AG04450 (cell line): ENCODE measurements at regions of chr22 and their contacts with region 1.

Region 1: GRCh38 chr22:41448189-41448808 is 1.7 kb upstream of the TOB2 start:
- DNase-seq: peak; percentile 97
- H3K4me3 ChIP-seq: peak overlapping the region; percentile 98
- H3K27ac ChIP-seq: peak overlapping the region; percentile 96
- H3K27me3 ChIP-seq: no peaks in the 10 kb centered on the region
- CTCF ChIP-seq: no peak

Region 2: DNA sequence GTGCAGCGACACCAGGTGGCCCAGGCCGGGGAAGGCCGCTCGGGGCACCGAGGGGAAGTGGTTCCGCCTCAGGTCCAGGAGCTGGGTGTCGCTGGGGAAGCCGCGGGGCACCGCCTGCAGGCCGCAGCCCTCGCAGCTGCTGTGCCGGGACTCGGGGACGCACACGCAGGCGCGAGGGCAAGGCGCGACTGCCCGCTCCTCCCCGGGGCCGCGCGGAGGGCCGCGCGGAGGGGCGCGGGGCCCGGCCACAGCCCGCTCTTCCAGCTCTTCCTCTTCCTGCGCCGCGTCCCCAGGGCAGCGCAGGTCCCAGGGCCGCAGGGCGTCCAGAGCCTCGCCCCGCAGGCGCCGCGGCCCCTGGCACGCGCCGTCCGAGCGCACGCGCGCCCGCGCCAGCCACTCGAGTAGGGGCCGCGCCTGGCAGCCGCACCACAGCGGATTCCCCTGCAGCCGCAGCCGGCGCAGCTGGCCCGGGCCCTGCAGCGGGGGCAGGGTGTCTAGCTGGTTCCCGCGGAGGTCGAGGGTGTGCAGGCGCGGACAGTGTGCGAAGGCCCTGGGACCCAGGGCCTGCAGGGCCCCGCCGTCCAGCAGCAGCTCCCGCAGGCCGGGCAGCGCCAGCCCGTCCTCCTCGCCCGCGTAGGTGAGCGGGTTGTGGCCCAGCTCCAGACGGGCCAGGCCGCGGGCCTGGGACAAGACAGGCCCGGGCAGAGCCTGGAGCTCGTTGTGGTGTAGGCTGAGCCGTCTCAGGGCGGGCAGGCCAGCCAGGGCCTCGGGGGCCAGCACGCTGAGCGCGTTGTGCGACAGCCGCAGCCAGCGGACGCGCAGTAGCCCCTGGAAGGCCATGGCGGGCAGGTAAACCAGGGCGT is 210.4 kb before region 1 on chr22:
- CTCF ChIA-PET with region 1: no interaction called
- POLR2A ChIA-PET with region 1: no interaction called
- DNase-seq: no peak
- H3K4me3 ChIP-seq: peak overlapping the region; percentile 17; the same call in 1 of the 2 replicates
- H3K27ac ChIP-seq: no peak overlapping the region
- H3K27me3 ChIP-seq: peaks cover 2% of the 10 kb centered on the region
- CTCF ChIP-seq: peak; percentile 24; the same call in 1 of the 2 replicates

Region 3: GRCh38 chr22:41285820-41286638 is 162.3 kb before region 1 on chr22 and contains the start of gene RANGAP1:
- CTCF ChIA-PET with region 1: no interaction called
- POLR2A ChIA-PET with region 1: interaction called, 16 read pairs
- DNase-seq: peak; percentile 96
- H3K4me3 ChIP-seq: peak within 1 kb of the TSS; percentile 83
- H3K27ac ChIP-seq: peak within 1 kb of the TSS; percentile 94
- H3K27me3 ChIP-seq: no peaks in the 10 kb centered on the region
- CTCF ChIP-seq: peak; percentile 25; the same call in 1 of the 2 replicates
- polyA plus RNA-seq, gene RANGAP1: 75.8 and 94.9 TPM in 2 replicates

Region 4: DNA sequence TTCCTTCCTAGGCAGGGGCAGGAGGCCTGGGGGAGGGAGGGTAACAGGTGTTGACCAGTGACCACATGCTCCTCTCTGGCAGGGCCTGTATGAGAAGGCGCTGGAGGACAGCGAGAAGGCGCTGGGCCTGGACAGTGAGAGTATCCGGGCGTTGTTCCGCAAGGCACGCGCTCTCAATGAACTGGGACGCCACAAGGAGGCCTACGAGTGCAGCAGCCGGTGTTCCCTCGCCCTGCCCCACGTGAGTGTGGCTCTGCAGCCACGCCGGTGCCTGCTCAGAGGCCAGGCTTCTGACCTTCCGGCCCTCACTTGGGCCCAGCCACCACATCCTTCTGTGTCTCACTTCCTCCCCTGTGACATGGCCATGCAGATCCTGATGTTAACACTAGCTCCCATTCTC is 121.2 kb before region 1 on chr22:
- CTCF ChIA-PET with region 1: no interaction called
- POLR2A ChIA-PET with region 1: no interaction called
- DNase-seq: no peak
- H3K4me3 ChIP-seq: no peak overlapping the region
- H3K27ac ChIP-seq: no peak overlapping the region
- H3K27me3 ChIP-seq: no peaks in the 10 kb centered on the region
- CTCF ChIP-seq: no peak

Region 5: DNA sequence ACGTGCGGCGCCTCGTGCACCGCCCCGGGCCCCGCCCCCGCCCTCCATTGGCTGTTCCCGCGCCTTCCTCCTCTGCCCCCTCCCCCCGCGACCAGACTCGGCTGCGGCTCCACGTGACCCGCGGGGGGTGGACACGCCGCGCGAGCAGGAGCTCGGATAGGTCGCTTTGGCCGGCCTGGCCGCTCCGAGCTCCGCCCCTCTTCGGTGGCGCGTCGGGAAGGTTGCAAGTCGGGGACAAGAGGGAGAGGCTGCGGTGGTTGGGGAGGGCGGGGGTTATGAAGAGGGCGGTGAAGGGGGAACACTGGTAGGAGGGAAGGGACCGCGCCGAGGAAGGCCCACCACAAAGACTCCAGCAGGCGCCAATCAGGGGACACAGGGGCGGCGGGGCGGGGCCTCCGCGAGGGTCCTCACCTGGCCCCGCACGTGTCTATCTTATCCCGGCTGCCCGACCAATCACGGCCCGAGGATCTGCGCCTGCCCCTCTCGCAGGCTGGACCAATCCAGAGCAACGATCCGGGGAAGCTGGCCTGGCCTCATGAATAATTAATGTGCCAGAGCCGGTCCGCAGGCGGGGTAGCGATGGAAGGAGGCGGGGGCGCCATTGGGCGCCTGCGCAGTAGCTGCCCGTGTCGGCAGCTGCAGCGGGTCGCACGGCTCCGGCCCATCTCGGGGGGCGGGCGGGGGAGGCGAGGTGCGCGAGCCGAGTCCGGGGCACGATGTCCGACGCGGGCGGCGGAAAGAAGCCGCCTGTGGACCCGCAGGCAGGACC is 66.8 kb before region 1 on chr22 and contains the start of gene TEF:
- CTCF ChIA-PET with region 1: no interaction called
- POLR2A ChIA-PET with region 1: interaction called, 24 read pairs
- DNase-seq: peak; percentile 98
- H3K4me3 ChIP-seq: peak within 1 kb of the TSS; percentile 74
- H3K27ac ChIP-seq: peak within 1 kb of the TSS; percentile 99
- H3K27me3 ChIP-seq: no peaks in the 10 kb centered on the region
- CTCF ChIP-seq: no peak
- polyA plus RNA-seq, gene TEF: 13.7 and 18.3 TPM in 2 replicates

Region 6: DNA sequence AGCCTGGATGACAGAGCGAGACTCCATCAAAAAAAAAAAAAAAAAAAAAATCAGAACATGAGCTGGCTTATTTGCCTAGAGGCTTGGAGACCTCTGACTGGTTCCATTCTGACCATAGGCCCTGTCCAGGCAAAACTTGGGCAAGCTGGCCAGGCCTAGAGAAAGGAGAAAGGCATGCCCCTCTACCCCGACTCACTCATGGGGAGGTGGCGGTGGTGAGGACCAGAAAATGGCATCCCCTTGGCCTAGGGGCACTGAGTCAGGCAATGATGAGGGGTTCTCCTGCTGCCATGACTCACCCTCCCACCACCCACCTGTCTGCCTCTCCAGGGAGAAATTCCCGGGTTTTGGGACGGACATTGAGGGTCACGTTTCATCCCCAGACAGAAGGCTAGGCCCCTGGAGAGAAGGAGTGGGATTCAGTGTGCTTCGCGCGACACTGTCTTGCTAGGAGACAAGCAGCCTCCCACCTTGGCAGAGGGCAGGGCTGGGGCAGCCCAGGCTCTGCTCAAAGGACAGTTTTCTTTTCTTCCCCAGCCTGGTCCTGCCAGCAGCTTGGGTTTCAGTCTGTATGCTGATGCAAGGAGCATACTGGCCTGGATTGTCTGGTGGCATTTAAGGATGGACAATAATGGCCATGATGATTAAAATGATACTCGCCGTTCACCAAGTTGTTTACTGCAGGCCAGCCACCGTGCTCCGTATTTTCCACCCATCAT is 18.9 kb before region 1 on chr22:
- CTCF ChIA-PET with region 1: no interaction called
- POLR2A ChIA-PET with region 1: interaction called, 10 read pairs
- DNase-seq: no peak
- H3K4me3 ChIP-seq: no peak overlapping the region
- H3K27ac ChIP-seq: peak overlapping the region; percentile 31
- H3K27me3 ChIP-seq: no peaks in the 10 kb centered on the region
- CTCF ChIP-seq: no peak

Region 7: GRCh38 chr22:41468381-41469217 is 20.3 kb after region 1 on chr22 and contains the starts of genes ACO2 and PHF5A:
- CTCF ChIA-PET with region 1: no interaction called
- POLR2A ChIA-PET with region 1: interaction called, 24 read pairs
- DNase-seq: peak; percentile 93
- H3K4me3 ChIP-seq: peak within 1 kb of the TSS; percentile 98
- H3K27ac ChIP-seq: peak within 1 kb of the TSS; percentile 86
- H3K27me3 ChIP-seq: no peaks in the 10 kb centered on the region
- CTCF ChIP-seq: no peak
- polyA plus RNA-seq, gene ACO2: 32.2 and 44.4 TPM in 2 replicates
- polyA plus RNA-seq, gene PHF5A: 47.9 and 53.8 TPM in 2 replicates

Region 8: DNA sequence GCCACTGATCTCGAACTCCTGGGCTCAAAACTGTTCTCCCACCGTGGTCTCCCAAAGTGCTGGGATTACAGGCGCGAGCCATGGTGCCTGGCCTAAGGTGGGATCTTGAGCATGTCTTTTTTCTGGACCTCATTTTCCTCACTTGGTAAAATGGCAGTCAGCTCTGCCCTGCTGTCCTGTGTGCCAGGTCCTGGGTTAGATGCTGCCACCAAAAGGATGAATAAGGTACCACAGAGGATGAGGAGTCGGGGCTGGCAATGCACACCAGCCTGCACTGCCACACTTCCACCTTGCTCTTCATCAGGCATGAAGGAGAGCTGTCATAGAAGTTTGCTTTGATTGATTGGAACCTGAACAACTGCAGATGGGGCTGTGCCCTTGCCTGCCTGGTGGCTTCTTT is 52.9 kb after region 1 on chr22:
- CTCF ChIA-PET with region 1: no interaction called
- POLR2A ChIA-PET with region 1: no interaction called
- DNase-seq: no peak
- H3K4me3 ChIP-seq: no peak overlapping the region
- H3K27ac ChIP-seq: no peak overlapping the region
- H3K27me3 ChIP-seq: no peaks in the 10 kb centered on the region
- CTCF ChIP-seq: no peak

Region 9: GRCh38 chr22:41526837-41527799 is 78.8 kb after region 1 on chr22:
- CTCF ChIA-PET with region 1: interaction called, 4 read pairs
- POLR2A ChIA-PET with region 1: interaction called, 11 read pairs
- DNase-seq: no peak
- H3K4me3 ChIP-seq: no peak overlapping the region
- H3K27ac ChIP-seq: peak overlapping the region; percentile 31
- H3K27me3 ChIP-seq: no peaks in the 10 kb centered on the region
- CTCF ChIP-seq: peak; percentile 86

Region 10: DNA sequence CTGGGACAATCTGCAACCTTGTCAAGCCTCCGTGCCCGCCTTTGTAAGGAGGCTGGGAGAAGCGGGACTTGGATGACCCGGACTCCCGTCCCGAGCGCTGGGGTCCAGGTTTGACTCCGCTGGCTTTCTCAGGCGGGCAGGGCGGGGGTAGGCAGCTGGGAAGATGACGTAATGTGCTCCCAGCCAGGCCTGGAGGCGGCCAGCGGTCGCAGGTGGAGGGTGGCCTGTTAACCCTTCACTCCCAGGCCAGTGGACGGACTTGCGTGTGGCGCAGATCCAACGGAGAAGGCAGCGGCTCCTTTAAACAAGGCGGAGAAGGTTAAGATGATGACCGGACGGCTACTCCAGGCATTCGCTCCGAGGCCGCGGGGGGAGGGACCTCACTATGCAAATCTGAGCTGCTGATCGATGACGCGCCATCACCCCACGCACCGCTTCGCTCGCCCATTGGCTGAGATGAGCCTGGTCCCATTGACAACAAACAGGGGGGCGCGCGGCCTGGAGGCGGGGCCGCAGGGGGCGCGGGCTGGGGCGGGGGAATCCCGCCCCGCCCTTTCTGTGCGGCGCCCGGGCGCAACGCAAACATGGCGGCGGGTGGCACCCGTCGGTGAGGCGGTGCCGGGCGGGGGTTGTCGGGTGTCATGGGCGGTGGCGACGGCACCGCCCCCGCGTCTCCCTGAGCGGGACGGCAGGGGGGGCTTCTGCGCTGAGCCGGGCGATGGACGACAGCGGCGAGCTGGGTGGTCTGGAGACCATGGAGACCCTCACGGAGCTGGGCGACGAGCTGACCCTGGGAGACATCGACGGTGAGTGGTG is 384.5 kb after region 1 on chr22 and contains the start of gene SREBF2:
- CTCF ChIA-PET with region 1: no interaction called
- POLR2A ChIA-PET with region 1: no interaction called
- DNase-seq: peak; percentile 98
- H3K4me3 ChIP-seq: peak within 1 kb of the TSS; percentile 85
- H3K27ac ChIP-seq: peak within 1 kb of the TSS; percentile 90
- H3K27me3 ChIP-seq: no peaks in the 10 kb centered on the region
- CTCF ChIP-seq: no peak
- polyA plus RNA-seq, gene SREBF2: 31.7 and 39.1 TPM in 2 replicates